Caco-2 (cell line): ENCODE measurements at regions of chr9 and their contacts with region 1.

Region 1: DNA sequence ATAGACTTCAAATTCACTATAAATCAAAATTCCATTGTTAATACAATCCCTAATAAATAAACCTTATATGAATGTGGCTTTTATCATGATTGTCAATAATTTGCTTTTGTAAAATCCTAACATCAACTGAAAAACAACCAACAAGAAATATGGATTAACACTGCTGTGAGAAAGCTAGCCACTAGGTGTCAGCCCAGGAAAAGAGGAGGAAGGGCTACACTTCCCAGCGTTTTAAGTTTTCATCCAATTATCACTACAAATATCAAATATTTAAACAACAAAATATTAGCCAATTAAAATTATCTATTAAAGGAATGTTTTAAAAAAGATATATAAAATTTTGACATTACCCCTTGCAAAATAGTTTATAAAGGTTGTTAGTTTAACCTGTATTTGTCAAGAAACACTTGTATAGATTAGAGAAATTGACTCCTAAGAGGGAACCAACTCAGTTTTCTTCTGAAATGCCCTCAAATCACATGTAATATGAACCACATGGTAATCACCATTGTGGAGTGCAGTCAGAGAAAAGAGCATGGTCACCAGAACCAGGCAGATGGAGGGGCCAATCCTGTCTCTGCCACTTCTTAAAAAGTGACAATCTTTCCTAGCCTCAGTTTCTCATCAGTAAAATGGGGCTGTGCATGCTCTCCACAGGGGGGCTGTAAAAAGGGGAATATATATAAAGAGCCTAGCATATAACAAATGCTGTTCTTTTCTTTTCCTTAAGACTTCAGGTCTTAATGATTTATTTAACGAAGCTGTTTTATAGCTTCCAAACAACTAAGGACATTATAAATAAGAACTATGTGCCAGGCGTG is 188.2 kb downstream of the CRB2 start:
- DNase-seq: peak in 1 of 2 experiments; percentile 37
- H3K4me3 ChIP-seq: no peak overlapping the region
- H3K4me3 Mint-ChIP-seq: no peak overlapping the region
- H3K27ac Mint-ChIP-seq: no peak overlapping the region
- H3K4me1 ChIP-seq: peaks cover 9% of the 10 kb centered on the region; the same call in 1 of the 2 replicates
- H3K4me1 Mint-ChIP-seq: peaks cover 7% of the 10 kb centered on the region
- H3K27me3 ChIP-seq: no peaks in the 10 kb centered on the region
- H3K27me3 Mint-ChIP-seq: no peaks in the 10 kb centered on the region
- CTCF ChIP-seq: peak; percentile 75 to 79

Region 2: DNA sequence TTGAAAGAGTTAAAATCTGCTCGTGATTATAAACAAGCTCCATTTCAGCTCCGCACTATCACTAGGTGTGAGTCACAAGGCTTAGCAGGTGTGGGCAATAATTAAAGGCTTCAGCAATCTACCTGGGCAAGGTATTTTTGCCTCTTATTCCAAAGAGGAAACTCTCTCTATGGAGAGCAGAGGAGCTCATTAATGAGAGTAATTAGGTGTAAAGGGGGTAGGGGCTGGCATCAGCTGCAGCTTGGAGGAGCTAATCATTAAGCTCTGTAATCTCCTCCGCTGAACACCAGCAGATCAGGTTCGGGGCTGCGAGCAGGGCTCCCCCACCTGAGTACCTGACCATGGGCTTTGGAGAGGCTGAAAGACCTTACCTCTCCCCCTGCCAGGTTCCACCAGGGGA is 59.0 kb before region 1 on chr9:
- CTCF ChIA-PET with region 1: no interaction called
- POLR2A ChIA-PET with region 1: no interaction called
- intact Hi-C with region 1: no loop called
- DNase-seq: peak; percentile 35 to 52
- H3K4me3 ChIP-seq: no peak overlapping the region
- H3K4me3 Mint-ChIP-seq: peak overlapping the region; percentile 25
- H3K27ac Mint-ChIP-seq: peak overlapping the region; percentile 36
- H3K4me1 ChIP-seq: peaks cover 45% of the 10 kb centered on the region
- H3K4me1 Mint-ChIP-seq: peaks cover 27% of the 10 kb centered on the region
- H3K27me3 ChIP-seq: no peaks in the 10 kb centered on the region
- H3K27me3 Mint-ChIP-seq: no peaks in the 10 kb centered on the region
- CTCF ChIP-seq: no peak

Region 3: DNA sequence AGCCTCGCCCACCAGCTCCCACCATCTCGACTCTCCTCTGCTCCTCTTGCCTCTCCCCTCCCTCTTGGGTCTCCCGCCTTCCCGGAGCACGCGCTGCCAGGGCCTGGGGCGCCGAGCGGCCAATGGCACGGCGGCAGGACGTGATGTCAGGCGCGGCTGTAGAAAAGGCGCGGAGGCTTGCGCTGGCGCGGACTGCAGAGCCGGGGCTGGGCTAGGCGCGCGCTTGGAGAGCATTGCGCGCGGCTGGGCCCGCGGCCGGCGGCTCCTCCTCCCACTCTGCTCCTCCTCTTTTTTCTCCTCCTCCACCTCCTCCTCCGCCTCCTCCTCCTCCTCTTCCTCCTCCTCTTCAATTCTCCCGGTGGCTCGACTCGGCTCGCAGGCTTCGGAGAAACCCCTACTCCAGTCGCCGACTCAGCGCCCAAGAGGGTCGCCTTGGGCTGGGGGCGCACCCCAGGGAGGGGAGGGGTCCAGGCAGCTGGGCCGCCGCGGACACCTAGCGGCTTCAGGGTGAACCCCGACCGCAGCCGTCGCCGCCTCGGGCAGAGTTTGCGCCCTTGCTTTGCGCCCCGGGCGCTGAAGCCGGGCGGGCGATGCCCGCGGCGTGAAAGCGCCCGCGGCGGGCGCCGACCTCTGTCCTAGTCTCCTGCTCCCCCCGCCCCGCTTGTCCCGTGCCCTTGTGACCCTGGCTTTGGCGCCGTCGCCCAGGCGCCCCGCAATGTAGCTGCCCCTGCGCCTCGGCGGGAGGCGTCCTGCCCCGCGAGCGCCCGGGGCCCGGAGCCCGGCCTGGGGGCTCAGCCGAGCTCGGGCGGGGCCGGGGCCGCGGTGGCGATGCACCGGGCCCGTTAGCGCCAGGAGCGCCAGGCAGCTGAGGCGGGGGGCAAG is 467.4 kb after region 1 on chr9 and contains the start of gene LHX2:
- CTCF ChIA-PET with region 1: no interaction called
- POLR2A ChIA-PET with region 1: no interaction called
- intact Hi-C with region 1: loop called (anchors 10 kb)
- DNase-seq: peak; percentile 88 to 89
- H3K4me3 ChIP-seq: peak within 1 kb of the TSS; percentile 56
- H3K4me3 Mint-ChIP-seq: peak within 1 kb of the TSS; percentile 87
- H3K27ac Mint-ChIP-seq: no peak within 1 kb of the TSS
- H3K4me1 ChIP-seq: peaks cover 36% of the 10 kb centered on the region
- H3K4me1 Mint-ChIP-seq: peaks cover 16% of the 10 kb centered on the region
- H3K27me3 ChIP-seq: peaks cover 11% of the 10 kb centered on the region
- H3K27me3 Mint-ChIP-seq: peaks cover 16% of the 10 kb centered on the region
- CTCF ChIP-seq: no peak
- total RNA-seq, gene LHX2: 2.6 and 4.0 TPM in 2 replicates

Region 4: GRCh38 chr9:124110307-124110915 is 566.2 kb after region 1 on chr9:
- CTCF ChIA-PET with region 1: no interaction called
- POLR2A ChIA-PET with region 1: no interaction called
- intact Hi-C with region 1: loop called (anchors 5 kb)
- DNase-seq: peak; percentile 66 to 83
- H3K4me3 ChIP-seq: no peak overlapping the region
- H3K4me3 Mint-ChIP-seq: no peak overlapping the region
- H3K27ac Mint-ChIP-seq: no peak overlapping the region
- H3K4me1 ChIP-seq: no peaks in the 10 kb centered on the region
- H3K4me1 Mint-ChIP-seq: no peaks in the 10 kb centered on the region
- H3K27me3 ChIP-seq: no peaks in the 10 kb centered on the region
- H3K27me3 Mint-ChIP-seq: peaks cover 13% of the 10 kb centered on the region
- CTCF ChIP-seq: no peak